K562 (cell line): ENCODE measurements at regions of chr11 and their contacts with region 1.

Region 1: DNA sequence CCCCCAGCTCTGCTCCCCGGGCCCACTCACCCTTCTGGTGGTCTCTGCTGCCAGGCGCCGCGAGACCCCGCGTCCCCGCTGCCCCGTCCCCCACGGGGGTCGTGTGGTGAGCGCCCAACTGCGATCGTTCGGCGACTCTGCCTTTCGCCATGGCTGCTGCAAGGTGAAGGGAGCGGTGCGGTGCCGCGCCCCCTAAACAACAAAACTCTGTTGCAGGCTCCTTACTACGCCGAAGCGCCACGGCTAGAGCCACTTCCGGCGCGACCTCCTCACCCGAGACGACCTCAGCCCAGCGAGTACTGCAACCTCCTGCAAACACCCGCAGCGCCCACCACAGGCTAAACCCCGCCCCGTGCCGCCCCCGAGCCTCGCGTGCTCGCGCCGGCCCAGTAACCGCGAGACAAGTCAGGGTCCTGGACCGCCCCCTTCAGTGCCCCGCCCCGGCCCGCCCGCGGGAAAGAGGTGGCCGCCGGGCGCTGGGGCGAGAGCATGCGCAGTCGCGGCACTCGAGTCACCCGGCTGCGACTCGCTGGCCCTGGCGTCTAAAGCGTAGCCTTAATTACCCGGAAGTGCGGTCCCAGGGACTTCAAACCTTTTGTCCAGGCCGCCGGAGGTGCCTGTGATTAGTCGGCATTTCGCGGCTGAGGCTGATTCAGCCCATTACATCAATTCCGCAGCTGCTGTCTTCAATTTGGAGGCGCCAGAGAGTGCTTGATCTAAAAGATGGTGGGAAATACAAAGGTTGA is at the start of gene TMEM41B:
- DNase-seq: peak; percentile 99
- ATAC-seq: peak; percentile 95
- H3K4me3 ChIP-seq: peak within 1 kb of the TSS; percentile 97
- H3K27ac ChIP-seq: peak within 1 kb of the TSS; percentile 100
- H3K4me1 ChIP-seq: peaks cover 23 to 32% of the 10 kb centered on the region in 2 experiments
- H3K27me3 ChIP-seq: no peaks in the 10 kb centered on the region
- CTCF ChIP-seq: peak in 2 of 3 experiments; percentile 15 to 20; a peak in 2 of 6 replicates
- EP300 ChIP-seq: peak; percentile 68
- POLR2A ChIP-seq: peak; percentile 94
- RAD21 ChIP-seq: no peak; a peak in 1 of 4 replicates
- polyA plus RNA-seq, gene TMEM41B: 17.1 to 24.7 TPM

Region 2: DNA sequence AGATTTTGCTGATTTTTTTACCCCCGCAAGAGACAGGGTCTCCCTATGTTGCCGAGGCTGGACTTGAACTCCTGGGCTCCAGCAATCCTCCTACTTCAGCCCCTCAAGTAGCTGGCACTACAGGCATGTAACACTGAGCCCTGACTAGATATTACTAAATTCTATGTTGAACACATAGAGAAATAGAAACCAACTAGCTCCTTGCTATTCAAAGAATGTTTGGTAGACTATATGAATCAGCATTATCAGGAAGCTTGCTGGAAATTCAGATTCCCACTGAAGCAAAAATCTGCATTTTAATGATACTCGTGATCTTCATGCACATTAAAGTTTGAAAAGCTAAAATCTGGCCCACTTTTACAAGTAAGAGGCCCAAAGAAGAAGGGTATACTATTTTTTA is 12.0 kb before region 1 on chr11:
- CTCF ChIA-PET with region 1: no interaction called
- POLR2A ChIA-PET with region 1: interaction called, 26 read pairs
- in situ Hi-C with region 1: no loop called
- intact Hi-C with region 1: no loop called
- DNase-seq: no peak
- ATAC-seq: no peak
- H3K4me3 ChIP-seq: no peak overlapping the region
- H3K27ac ChIP-seq: no peak overlapping the region; the same call in 2 of the 3 replicates
- H3K4me1 ChIP-seq: peaks cover 0 to 5% of the 10 kb centered on the region in 2 experiments; a peak in 1 of 5 replicates
- H3K27me3 ChIP-seq: no peaks in the 10 kb centered on the region
- CTCF ChIP-seq: no peak
- EP300 ChIP-seq: no peak
- POLR2A ChIP-seq: no peak
- RAD21 ChIP-seq: no peak

Region 3: DNA sequence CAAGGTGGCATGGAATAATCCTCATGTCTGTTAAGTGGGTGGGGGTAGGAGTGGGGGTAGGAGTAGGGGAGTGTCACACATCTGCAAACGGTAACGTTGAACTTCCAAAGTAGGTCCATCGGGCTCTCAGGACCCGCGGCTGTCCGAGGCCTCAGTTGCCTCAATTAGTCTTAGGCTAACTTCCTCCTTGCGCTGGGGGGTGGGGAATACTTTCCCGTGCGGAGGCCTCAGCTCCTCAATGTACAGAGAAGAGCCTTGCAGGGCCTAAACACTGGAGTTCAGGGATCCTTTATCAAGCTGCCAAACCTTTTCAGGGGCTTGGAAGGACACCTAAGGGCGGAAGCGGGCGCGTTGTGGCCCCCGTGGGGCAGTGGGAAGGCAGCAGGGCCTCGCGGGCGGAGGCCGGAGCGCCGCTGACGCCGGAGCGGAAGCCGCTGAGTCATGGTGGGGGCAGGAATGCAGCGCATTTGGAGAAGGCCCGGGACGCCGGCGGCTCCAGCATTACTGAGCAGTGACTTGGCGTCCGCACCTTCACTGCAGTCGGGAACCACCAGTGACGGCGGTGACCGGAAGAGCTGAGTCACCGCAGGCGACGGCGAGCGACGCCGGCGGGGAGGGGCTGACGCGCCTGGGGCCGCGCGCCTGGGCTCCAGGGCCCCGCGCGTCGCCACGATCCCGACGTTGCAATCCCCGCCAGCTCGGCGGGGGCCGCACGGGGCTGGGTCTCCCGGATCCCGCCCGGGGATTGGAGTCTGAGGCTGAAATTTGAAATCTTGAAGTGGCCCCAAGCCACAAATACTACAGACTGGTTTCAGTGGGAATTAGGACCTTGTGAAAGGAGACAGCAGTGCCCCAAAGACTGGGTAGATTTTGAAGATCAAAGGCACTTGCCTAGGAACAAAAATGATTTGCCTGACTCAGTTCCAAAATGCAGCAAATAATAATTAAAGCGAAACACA is 49.8 kb after region 1 on chr11:
- CTCF ChIA-PET with region 1: no interaction called
- POLR2A ChIA-PET with region 1: interaction called, 5 read pairs
- in situ Hi-C with region 1: loop called (anchors 5 kb)
- intact Hi-C with region 1: loop called (anchors 1 kb)
- DNase-seq: peak; percentile 90 to 99 (median 91)
- ATAC-seq: peak; percentile 96
- H3K4me3 ChIP-seq: peak overlapping the region; percentile 40
- H3K27ac ChIP-seq: peak overlapping the region; percentile 100
- H3K4me1 ChIP-seq: peaks cover 30 to 34% of the 10 kb centered on the region in 2 experiments
- H3K27me3 ChIP-seq: no peaks in the 10 kb centered on the region
- CTCF ChIP-seq: peak in 1 of 3 experiments; percentile 28; a peak in 2 of 6 replicates
- EP300 ChIP-seq: peak; percentile 83
- POLR2A ChIP-seq: peak; percentile 80
- RAD21 ChIP-seq: peak; percentile 28 to 38; a peak in 3 of 4 replicates

Region 4: DNA sequence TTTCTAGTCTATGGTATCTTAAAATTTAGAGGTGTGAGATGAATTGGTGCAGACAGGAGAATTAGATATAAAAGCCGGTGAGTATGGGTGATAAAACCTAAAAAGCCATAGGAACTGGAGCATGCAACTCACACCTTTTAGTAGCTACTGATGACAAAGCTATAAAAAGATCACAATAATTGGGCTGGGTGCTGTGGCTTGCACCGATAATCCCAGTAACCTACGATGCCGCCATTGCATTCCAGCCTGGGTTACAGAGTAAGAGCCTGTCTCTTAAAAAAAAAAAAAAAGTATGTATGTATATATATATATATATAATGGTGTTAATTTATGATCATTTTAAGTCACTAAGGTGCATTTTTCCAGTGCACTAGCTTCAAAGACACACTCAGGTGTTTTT is 276.3 kb after region 1 on chr11:
- CTCF ChIA-PET with region 1: no interaction called
- POLR2A ChIA-PET with region 1: no interaction called
- in situ Hi-C with region 1: no loop called
- intact Hi-C with region 1: no loop called
- DNase-seq: no peak
- ATAC-seq: peak; percentile 21
- H3K4me3 ChIP-seq: no peak overlapping the region
- H3K27ac ChIP-seq: no peak overlapping the region
- H3K4me1 ChIP-seq: peaks cover 4% of the 10 kb centered on the region in 2 experiments; a peak in 1 of 5 replicates
- H3K27me3 ChIP-seq: no peaks in the 10 kb centered on the region
- CTCF ChIP-seq: no peak
- EP300 ChIP-seq: no peak
- POLR2A ChIP-seq: 0 out of 2 replicates have a peak, but pooled peaks have one; percentile 2
- RAD21 ChIP-seq: no peak